K562 (cell line): ENCODE measurements at regions of chr2 and their contacts with region 1.

Region 1: DNA sequence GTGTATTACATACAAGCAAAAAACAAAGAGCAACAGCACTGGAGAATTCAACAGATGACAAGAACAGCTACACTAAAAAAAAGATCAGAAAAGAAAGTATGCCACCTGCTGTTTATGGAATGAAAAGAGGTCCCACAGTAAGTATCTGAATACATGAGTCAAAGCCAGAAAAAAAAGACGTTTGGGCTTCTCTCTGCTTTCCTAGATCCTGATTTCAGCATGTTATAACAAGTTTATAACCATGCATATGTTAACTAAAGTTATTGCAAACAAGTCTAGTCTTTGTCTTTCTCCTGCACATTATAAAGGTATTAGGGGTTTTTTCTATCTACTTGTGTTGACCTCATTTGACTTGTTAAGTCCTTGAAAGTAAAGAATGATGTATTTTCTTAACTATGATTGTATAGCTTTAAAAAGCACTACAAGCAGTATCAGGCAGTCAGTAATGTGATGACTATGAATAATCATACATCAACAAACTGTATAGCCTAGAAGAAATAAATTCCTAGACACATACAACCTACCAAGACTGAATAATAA is 108.5 kb upstream of the COL5A2 start:
- DNase-seq: peak in 1 of 4 experiments; percentile 28
- ATAC-seq: peak; percentile 68; the same call in 2 of the 3 replicates
- H3K4me3 ChIP-seq: no peak overlapping the region
- H3K27ac ChIP-seq: no peak overlapping the region
- H3K4me1 ChIP-seq: no peaks in the 10 kb centered on the region
- H3K27me3 ChIP-seq: no peaks in the 10 kb centered on the region
- CTCF ChIP-seq: peak in 2 of 3 experiments; percentile 54 to 59; a peak in 3 of 6 replicates
- EP300 ChIP-seq: no peak
- POLR2A ChIP-seq: no peak
- RAD21 ChIP-seq: peak; percentile 63 to 75

Region 2: GRCh38 chr2:189096769-189097447 is 191.1 kb before region 1 on chr2:
- CTCF ChIA-PET with region 1: interaction called, 3 read pairs
- POLR2A ChIA-PET with region 1: no interaction called
- in situ Hi-C with region 1: no loop called
- intact Hi-C with region 1: loop called (anchors 5 kb)
- DNase-seq: no peak
- ATAC-seq: no peak
- H3K4me3 ChIP-seq: no peak overlapping the region
- H3K27ac ChIP-seq: no peak overlapping the region
- H3K4me1 ChIP-seq: no peaks in the 10 kb centered on the region
- H3K27me3 ChIP-seq: no peaks in the 10 kb centered on the region
- CTCF ChIP-seq: no peak
- EP300 ChIP-seq: no peak
- POLR2A ChIP-seq: no peak
- RAD21 ChIP-seq: no peak

Region 3: DNA sequence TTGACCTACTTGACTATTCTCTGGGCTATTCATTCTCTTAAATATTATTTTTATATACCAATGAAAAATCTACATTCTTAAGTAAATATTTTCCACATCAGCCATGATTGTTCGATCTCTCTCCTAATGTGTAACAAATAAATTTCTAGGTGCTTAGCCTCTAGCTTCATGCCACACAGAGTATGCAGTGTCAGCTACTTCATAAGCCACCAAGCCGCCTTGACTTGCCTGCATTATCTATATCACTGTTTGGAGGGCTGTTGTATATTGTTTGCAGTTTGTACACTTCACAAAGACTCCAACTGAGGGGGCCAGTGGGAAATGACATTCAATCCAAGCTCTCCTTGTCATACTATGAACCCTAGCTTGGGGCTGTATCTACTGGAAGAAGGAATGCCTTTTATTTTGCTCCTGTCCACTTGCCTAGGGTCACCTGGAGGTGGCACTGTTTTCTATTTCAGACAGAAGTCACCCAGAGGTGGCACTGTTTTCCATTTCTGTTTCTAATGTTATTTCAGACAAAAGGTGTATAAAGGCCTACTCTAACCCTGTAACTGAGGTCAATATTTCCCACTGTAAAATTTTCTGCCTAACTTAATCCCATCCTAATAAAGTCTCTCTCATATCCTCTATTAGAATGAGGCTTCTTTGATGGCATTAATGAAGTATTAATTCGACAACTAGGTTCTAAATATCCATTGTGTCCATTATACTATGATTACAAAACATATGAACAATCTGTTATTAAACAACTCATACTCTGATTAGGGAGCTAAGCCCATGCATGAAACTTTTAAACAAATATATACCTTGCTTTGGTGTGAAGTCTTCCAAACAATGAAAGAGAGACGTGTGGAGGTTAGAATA is 144.9 kb before region 1 on chr2:
- CTCF ChIA-PET with region 1: interaction called, 7 read pairs
- POLR2A ChIA-PET with region 1: interaction called, 4 read pairs
- in situ Hi-C with region 1: no loop called
- intact Hi-C with region 1: loop called (anchors 1 kb)
- DNase-seq: peak; percentile 24 to 66 (median 32)
- ATAC-seq: peak; percentile 96
- H3K4me3 ChIP-seq: no peak overlapping the region
- H3K27ac ChIP-seq: no peak overlapping the region
- H3K4me1 ChIP-seq: no peaks in the 10 kb centered on the region
- H3K27me3 ChIP-seq: no peaks in the 10 kb centered on the region
- CTCF ChIP-seq: peak; percentile 84 to 99 (median 99)
- EP300 ChIP-seq: no peak
- POLR2A ChIP-seq: no peak
- RAD21 ChIP-seq: peak; percentile 66 to 73

Region 4: GRCh38 chr2:189254268-189254883 is 33.7 kb before region 1 on chr2:
- CTCF ChIA-PET with region 1: no interaction called
- POLR2A ChIA-PET with region 1: no interaction called
- in situ Hi-C with region 1: no loop called
- intact Hi-C with region 1: no loop called
- DNase-seq: no peak
- ATAC-seq: no peak
- H3K4me3 ChIP-seq: no peak overlapping the region
- H3K27ac ChIP-seq: no peak overlapping the region
- H3K4me1 ChIP-seq: no peaks in the 10 kb centered on the region
- H3K27me3 ChIP-seq: no peaks in the 10 kb centered on the region
- CTCF ChIP-seq: no peak
- EP300 ChIP-seq: no peak
- POLR2A ChIP-seq: no peak
- RAD21 ChIP-seq: no peak